Endothelial cell of umbilical vein (primary cell): ENCODE measurements at regions of chr15 and their contacts with region 1.

Region 1: DNA sequence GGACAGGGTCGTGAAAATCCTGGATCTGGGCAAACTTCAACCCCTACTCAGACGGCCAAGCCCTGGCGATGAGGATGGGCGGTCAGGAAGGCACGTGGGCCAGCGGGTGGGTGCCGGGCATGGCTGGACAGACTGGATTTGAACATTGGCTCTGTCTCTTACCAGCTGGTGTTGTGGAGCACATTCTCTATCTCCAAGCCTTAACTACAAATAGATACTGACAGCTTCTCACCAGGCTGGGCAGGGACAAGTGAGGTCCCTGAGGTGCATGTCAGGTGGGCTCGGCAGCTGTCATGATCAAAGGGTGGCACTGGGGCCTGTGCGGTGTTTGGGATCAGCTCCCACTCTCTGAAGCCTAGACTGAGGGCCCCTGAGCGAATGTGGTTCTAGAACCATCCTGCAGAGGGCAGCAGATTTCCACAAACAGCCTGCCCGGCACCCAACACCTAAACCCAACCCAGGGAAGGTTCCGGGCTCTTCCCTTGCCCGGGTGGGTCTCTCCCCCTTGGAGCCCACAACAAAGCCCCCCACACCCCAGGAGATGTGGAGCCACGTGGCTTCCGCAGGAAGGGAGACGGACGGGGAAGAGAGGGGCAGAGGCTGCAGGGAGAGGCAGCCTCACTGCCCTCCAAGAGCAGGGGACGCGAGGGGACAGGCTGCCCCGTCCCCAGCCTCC is 58.4 kb downstream of the RGMA start:
- DNase-seq: peak; percentile 64
- H3K4me3 ChIP-seq: no peak overlapping the region
- H3K27ac ChIP-seq: no peak overlapping the region
- H3K4me1 ChIP-seq: peaks cover 23% of the 10 kb centered on the region
- H3K27me3 ChIP-seq: no peaks in the 10 kb centered on the region
- CTCF ChIP-seq: peak; percentile 69 to 86
- POLR2A ChIP-seq: no peak

Region 2: GRCh38 chr15:92463826-92464225 is 566.7 kb before region 1 on chr15:
- CTCF ChIA-PET with region 1: no interaction called
- POLR2A ChIA-PET with region 1: no interaction called
- dilution Hi-C with region 1: no loop called
- intact Hi-C with region 1: no loop called
- DNase-seq: no peak
- H3K4me3 ChIP-seq: no peak overlapping the region
- H3K27ac ChIP-seq: no peak overlapping the region
- H3K4me1 ChIP-seq: no peaks in the 10 kb centered on the region
- H3K27me3 ChIP-seq: no peaks in the 10 kb centered on the region
- CTCF ChIP-seq: no peak
- POLR2A ChIP-seq: no peak

Region 3: GRCh38 chr15:92808978-92809879 is 221.3 kb before region 1 on chr15:
- CTCF ChIA-PET with region 1: interaction called, 10 read pairs
- POLR2A ChIA-PET with region 1: no interaction called
- dilution Hi-C with region 1: no loop called
- intact Hi-C with region 1: no loop called
- DNase-seq: peak; percentile 99
- H3K4me3 ChIP-seq: peak overlapping the region; percentile 32 to 51 (median 39)
- H3K27ac ChIP-seq: peak overlapping the region; percentile 88
- H3K4me1 ChIP-seq: peaks cover 16% of the 10 kb centered on the region
- H3K27me3 ChIP-seq: no peaks in the 10 kb centered on the region
- CTCF ChIP-seq: peak; percentile 85 to 100
- POLR2A ChIP-seq: peak; percentile 72

Region 4: DNA sequence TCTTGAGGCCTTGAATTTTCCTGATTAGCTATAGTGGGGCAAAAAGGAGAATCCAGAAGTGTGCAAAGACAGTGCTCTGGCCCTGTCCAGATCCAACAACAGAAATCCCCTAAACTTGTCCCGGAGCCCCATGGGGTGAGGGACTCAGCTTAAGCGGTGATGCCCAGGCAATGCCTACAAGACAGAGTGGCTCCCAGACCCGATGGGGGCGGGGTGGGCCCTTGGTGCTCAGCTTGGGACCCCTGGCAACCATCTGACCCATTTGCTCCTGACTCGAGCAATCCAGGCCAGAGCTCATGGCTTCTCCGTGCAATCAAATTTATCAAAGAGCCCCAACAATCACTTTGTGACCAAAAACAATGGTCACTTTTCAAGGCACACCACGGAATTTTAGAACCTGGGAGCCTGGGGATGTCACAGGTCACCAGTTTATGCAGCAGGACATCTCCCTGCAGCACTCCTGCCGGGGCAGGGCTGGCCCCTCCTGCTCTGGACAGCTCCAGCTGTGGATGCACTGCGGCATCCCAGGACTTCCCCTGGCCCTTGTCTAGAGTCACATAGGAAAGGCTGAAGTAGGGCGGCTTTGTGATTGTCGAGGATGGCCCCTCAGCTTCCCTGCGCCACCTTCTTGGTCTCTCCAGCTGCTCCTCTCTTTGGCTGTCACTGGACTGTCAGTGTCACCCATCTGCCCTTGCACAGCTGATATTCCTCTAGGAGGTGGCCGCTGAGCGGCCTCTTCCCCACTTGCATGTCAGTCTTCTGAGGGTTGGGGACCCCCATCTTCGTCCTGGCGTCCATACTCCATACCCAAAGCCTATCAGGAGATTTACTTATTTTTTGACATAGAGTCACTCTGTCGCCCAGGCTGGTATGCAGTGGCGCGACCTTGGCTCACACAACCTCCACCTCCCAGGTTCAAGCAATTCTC is 30.0 kb after region 1 on chr15:
- CTCF ChIA-PET with region 1: interaction called, 13 read pairs
- POLR2A ChIA-PET with region 1: no interaction called
- dilution Hi-C with region 1: no loop called
- intact Hi-C with region 1: no loop called
- DNase-seq: no peak
- H3K4me3 ChIP-seq: no peak overlapping the region
- H3K27ac ChIP-seq: no peak overlapping the region
- H3K4me1 ChIP-seq: no peaks in the 10 kb centered on the region
- H3K27me3 ChIP-seq: no peaks in the 10 kb centered on the region
- CTCF ChIP-seq: no peak
- POLR2A ChIP-seq: no peak

Region 5: GRCh38 chr15:93087825-93088199 is 57.2 kb after region 1 on chr15:
- CTCF ChIA-PET with region 1: interaction called, 22 read pairs
- POLR2A ChIA-PET with region 1: no interaction called
- dilution Hi-C with region 1: no loop called
- intact Hi-C with region 1: no loop called
- DNase-seq: peak; percentile 47
- H3K4me3 ChIP-seq: no peak overlapping the region
- H3K27ac ChIP-seq: no peak overlapping the region
- H3K4me1 ChIP-seq: peaks cover 3% of the 10 kb centered on the region
- H3K27me3 ChIP-seq: peaks cover 40 to 53% of the 10 kb centered on the region in 2 experiments
- CTCF ChIP-seq: peak; percentile 78 to 82
- POLR2A ChIP-seq: no peak

Region 6: DNA sequence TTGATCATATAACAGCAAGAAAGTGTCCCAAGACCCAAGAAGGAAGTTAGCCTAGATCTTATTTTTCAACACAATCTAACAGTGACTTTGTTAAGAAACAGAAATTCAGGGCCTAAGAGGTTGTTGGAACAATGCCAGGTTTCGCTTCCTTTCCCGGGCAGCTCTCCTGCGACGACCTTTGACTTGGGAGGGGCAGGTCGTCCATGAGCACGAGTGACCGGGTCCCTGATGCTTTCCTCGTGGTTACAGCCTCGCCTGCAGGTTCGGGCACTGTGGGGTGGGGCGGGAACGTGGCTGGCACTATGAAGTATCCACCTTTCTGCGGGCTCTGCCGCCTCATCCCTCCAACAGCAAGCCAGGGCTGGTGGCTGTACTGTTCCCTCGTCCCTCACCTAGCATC is 148.5 kb after region 1 on chr15:
- CTCF ChIA-PET with region 1: no interaction called
- POLR2A ChIA-PET with region 1: no interaction called
- dilution Hi-C with region 1: no loop called
- intact Hi-C with region 1: no loop called
- DNase-seq: no peak
- H3K4me3 ChIP-seq: no peak overlapping the region
- H3K27ac ChIP-seq: no peak overlapping the region
- H3K4me1 ChIP-seq: no peaks in the 10 kb centered on the region
- H3K27me3 ChIP-seq: no peaks in the 10 kb centered on the region
- CTCF ChIP-seq: no peak
- POLR2A ChIP-seq: no peak

Region 7: GRCh38 chr15:94119923-94120775 is 1089.6 kb after region 1 on chr15:
- CTCF ChIA-PET with region 1: interaction called, 21 read pairs
- POLR2A ChIA-PET with region 1: no interaction called
- dilution Hi-C with region 1: no loop called
- intact Hi-C with region 1: loop called (anchors 1 kb)
- DNase-seq: peak; percentile 65
- H3K4me3 ChIP-seq: no peak overlapping the region
- H3K27ac ChIP-seq: no peak overlapping the region
- H3K4me1 ChIP-seq: no peaks in the 10 kb centered on the region
- H3K27me3 ChIP-seq: no peaks in the 10 kb centered on the region
- CTCF ChIP-seq: peak; percentile 62 to 63
- POLR2A ChIP-seq: no peak